CD4-positive, alpha-beta T cell (primary cell): ENCODE measurements at regions of chr9 and their contacts with region 1.

Region 1: GRCh38 chr9:128361986-128362646 is 9.1 kb upstream of the URM1 start:
- DNase-seq: peak; percentile 42 to 82 (median 58)
- ATAC-seq: peak; percentile 91
- H3K4me3 ChIP-seq: peak overlapping the region; percentile 59
- H3K4me3 Mint-ChIP-seq: peak overlapping the region; percentile 82
- H3K27ac ChIP-seq: no peak overlapping the region
- H3K27ac Mint-ChIP-seq: peak overlapping the region; percentile 30
- H3K4me1 ChIP-seq: peaks cover 23% of the 10 kb centered on the region
- H3K4me1 Mint-ChIP-seq: peaks cover 14% of the 10 kb centered on the region
- H3K27me3 ChIP-seq: no peaks in the 10 kb centered on the region
- H3K27me3 Mint-ChIP-seq: no peaks in the 10 kb centered on the region
- CTCF ChIP-seq: peak; percentile 92

Region 2: GRCh38 chr9:128296337-128297220 is 65.5 kb before region 1 on chr9:
- CTCF ChIA-PET with region 1: interaction called, 8 read pairs
- POLR2A ChIA-PET with region 1: no interaction called
- intact Hi-C with region 1: loop called in 1 of 2 experiments (anchors 5 kb)
- DNase-seq: no peak
- ATAC-seq: no peak
- H3K4me3 ChIP-seq: no peak overlapping the region
- H3K4me3 Mint-ChIP-seq: no peak overlapping the region
- H3K27ac ChIP-seq: no peak overlapping the region
- H3K27ac Mint-ChIP-seq: no peak overlapping the region
- H3K4me1 ChIP-seq: no peaks in the 10 kb centered on the region
- H3K4me1 Mint-ChIP-seq: peaks cover 5% of the 10 kb centered on the region
- H3K27me3 ChIP-seq: no peaks in the 10 kb centered on the region
- H3K27me3 Mint-ChIP-seq: no peaks in the 10 kb centered on the region
- CTCF ChIP-seq: no peak

Region 3: GRCh38 chr9:128310461-128310860 is 51.7 kb before region 1 on chr9:
- CTCF ChIA-PET with region 1: no interaction called
- POLR2A ChIA-PET with region 1: no interaction called
- intact Hi-C with region 1: no loop called
- DNase-seq: no peak
- ATAC-seq: no peak
- H3K4me3 ChIP-seq: no peak overlapping the region
- H3K4me3 Mint-ChIP-seq: no peak overlapping the region
- H3K27ac ChIP-seq: no peak overlapping the region
- H3K27ac Mint-ChIP-seq: no peak overlapping the region
- H3K4me1 ChIP-seq: no peaks in the 10 kb centered on the region
- H3K4me1 Mint-ChIP-seq: no peaks in the 10 kb centered on the region
- H3K27me3 ChIP-seq: no peaks in the 10 kb centered on the region
- H3K27me3 Mint-ChIP-seq: no peaks in the 10 kb centered on the region
- CTCF ChIP-seq: no peak

Region 4: GRCh38 chr9:128339771-128340690 is 22.1 kb before region 1 on chr9 and contains the start of gene SLC27A4:
- CTCF ChIA-PET with region 1: interaction called, 13 read pairs
- POLR2A ChIA-PET with region 1: no interaction called
- intact Hi-C with region 1: no loop called
- DNase-seq: peak; percentile 61 to 94 (median 76)
- ATAC-seq: peak; percentile 92
- H3K4me3 ChIP-seq: peak within 1 kb of the TSS; percentile 75
- H3K4me3 Mint-ChIP-seq: peak within 1 kb of the TSS; percentile 98
- H3K27ac ChIP-seq: peak within 1 kb of the TSS; percentile 41 to 46
- H3K27ac Mint-ChIP-seq: peak within 1 kb of the TSS; percentile 81
- H3K4me1 ChIP-seq: peaks cover 21% of the 10 kb centered on the region
- H3K4me1 Mint-ChIP-seq: peaks cover 7% of the 10 kb centered on the region
- H3K27me3 ChIP-seq: no peaks in the 10 kb centered on the region
- H3K27me3 Mint-ChIP-seq: no peaks in the 10 kb centered on the region
- CTCF ChIP-seq: no peak
- total RNA-seq, gene SLC27A4: 2.2 to 3.1 TPM

Region 5: GRCh38 chr9:128412120-128412790 is 50.1 kb after region 1 on chr9:
- CTCF ChIA-PET with region 1: interaction called, 20 read pairs
- POLR2A ChIA-PET with region 1: no interaction called
- intact Hi-C with region 1: loop called (anchors 2 kb)
- DNase-seq: peak; percentile 19 to 66 (median 39)
- ATAC-seq: peak; percentile 79
- H3K4me3 ChIP-seq: no peak overlapping the region
- H3K4me3 Mint-ChIP-seq: no peak overlapping the region
- H3K27ac ChIP-seq: no peak overlapping the region
- H3K27ac Mint-ChIP-seq: no peak overlapping the region
- H3K4me1 ChIP-seq: no peaks in the 10 kb centered on the region
- H3K4me1 Mint-ChIP-seq: no peaks in the 10 kb centered on the region
- H3K27me3 ChIP-seq: peaks cover 38 to 53% of the 10 kb centered on the region in 2 experiments
- H3K27me3 Mint-ChIP-seq: peaks cover 66% of the 10 kb centered on the region
- CTCF ChIP-seq: no peak

Region 6: DNA sequence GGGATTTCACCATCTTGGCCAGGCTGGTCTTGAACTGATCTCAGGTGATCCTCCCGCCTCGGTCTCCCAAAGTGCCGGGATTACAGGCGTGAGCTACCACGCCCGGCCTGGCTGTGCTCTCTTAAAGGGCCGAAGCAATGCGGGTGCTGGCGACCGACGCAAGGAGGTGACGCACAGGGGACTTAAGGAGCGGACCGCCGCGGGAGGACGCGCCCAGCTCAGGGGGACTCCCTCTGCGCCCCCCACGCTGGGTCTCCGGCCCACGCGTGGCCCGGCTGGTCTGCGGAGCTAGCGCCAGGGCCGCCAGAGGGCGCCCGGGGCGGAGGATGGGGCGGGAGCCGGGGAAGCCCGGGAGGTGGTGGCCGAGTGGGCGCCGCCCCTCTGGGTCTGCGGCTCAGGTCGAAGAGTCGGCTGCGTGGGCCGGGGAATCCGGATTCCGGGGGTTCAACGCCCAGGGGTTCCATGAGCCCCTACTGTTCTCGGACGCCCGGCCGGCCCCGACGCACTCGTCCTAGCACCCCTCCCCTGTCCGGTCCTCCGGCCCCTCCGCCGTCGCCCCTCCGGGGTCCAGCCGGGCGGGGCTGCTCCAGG is 58.0 kb after region 1 on chr9:
- CTCF ChIA-PET with region 1: interaction called, 18 read pairs
- POLR2A ChIA-PET with region 1: interaction called, 8 read pairs
- intact Hi-C with region 1: no loop called
- DNase-seq: peak; percentile 25 to 85 (median 56)
- ATAC-seq: peak; percentile 80
- H3K4me3 ChIP-seq: peak overlapping the region; percentile 52
- H3K4me3 Mint-ChIP-seq: peak overlapping the region; percentile 80
- H3K27ac ChIP-seq: no peak overlapping the region
- H3K27ac Mint-ChIP-seq: no peak overlapping the region
- H3K4me1 ChIP-seq: peaks cover 25% of the 10 kb centered on the region
- H3K4me1 Mint-ChIP-seq: peaks cover 12% of the 10 kb centered on the region
- H3K27me3 ChIP-seq: peaks cover 24 to 38% of the 10 kb centered on the region in 2 experiments
- H3K27me3 Mint-ChIP-seq: peaks cover 37% of the 10 kb centered on the region
- CTCF ChIP-seq: peak; percentile 87

Region 7: GRCh38 chr9:128438343-128439109 is 76.4 kb after region 1 on chr9:
- CTCF ChIA-PET with region 1: interaction called, 9 read pairs
- POLR2A ChIA-PET with region 1: no interaction called
- intact Hi-C with region 1: loop called in 1 of 2 experiments (anchors 2 kb)
- DNase-seq: peak; percentile 64 to 88 (median 78)
- ATAC-seq: peak; percentile 97
- H3K4me3 ChIP-seq: no peak overlapping the region
- H3K4me3 Mint-ChIP-seq: no peak overlapping the region
- H3K27ac ChIP-seq: no peak overlapping the region
- H3K27ac Mint-ChIP-seq: no peak overlapping the region
- H3K4me1 ChIP-seq: peaks cover 7% of the 10 kb centered on the region
- H3K4me1 Mint-ChIP-seq: no peaks in the 10 kb centered on the region
- H3K27me3 ChIP-seq: no peaks in the 10 kb centered on the region
- H3K27me3 Mint-ChIP-seq: no peaks in the 10 kb centered on the region
- CTCF ChIP-seq: peak; percentile 86